ENCODE measurements at regions of chr22 and their contacts with region 1.

Region 1: DNA sequence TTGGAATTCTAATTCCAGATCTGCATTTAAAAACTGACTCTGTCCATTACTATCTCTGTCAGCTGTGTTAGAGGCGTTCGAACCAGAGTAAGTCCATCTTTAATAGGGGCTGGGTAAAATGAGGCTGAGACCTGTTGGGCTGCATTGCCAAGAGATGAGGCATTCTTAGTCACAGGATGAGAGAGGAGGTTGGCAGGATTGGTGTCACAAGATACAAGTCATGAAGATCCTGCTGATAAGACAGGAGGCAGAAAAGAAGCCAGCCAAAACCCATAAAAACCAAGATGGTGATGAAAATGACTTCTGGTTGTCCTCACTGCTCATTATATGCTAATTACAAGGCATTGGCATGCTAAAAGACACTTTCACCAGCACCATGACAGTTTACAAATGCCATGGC is 356.3 kb upstream of the ISX start:
- DNase-seq: no peak
- CTCF ChIP-seq: no peak

Region 2: GRCh38 chr22:34608540-34609115 is 101.0 kb before region 1 on chr22:
- in situ Hi-C with region 1: loop called (anchors 25 kb)
- DNase-seq: no peak
- CTCF ChIP-seq: no peak

Region 3: GRCh38 chr22:34847072-34847471 is 137.4 kb after region 1 on chr22:
- in situ Hi-C with region 1: no loop called
- DNase-seq: no peak
- CTCF ChIP-seq: no peak